Activated CD4-positive, alpha-beta T cell treated with anti-CD3 and anti-CD28 coated beads, Interleukin-2, amount 10 ng/mL, durations not matched to agents 24 days and 14 days (primary cell): ENCODE measurements at regions of chr4 and their contacts with region 1.

Region 1: GRCh38 chr4:39353478-39354253 is 12.5 kb downstream of the RFC1 start:
- DNase-seq: peak; percentile 82
- H3K4me3 Mint-ChIP-seq: peak overlapping the region; percentile 78
- H3K27ac Mint-ChIP-seq: peak overlapping the region; percentile 92
- H3K4me1 Mint-ChIP-seq: peaks cover 53% of the 10 kb centered on the region
- H3K27me3 Mint-ChIP-seq: no peaks in the 10 kb centered on the region

Region 2: GRCh38 chr4:38160487-38161207 is 1193.0 kb before region 1 on chr4:
- intact Hi-C with region 1: loop called (anchors 5 kb)
- DNase-seq: peak; percentile 88
- H3K4me3 Mint-ChIP-seq: peak overlapping the region; percentile 5
- H3K27ac Mint-ChIP-seq: peak overlapping the region; percentile 84
- H3K4me1 Mint-ChIP-seq: peaks cover 59% of the 10 kb centered on the region
- H3K27me3 Mint-ChIP-seq: peaks cover 7% of the 10 kb centered on the region

Region 3: DNA sequence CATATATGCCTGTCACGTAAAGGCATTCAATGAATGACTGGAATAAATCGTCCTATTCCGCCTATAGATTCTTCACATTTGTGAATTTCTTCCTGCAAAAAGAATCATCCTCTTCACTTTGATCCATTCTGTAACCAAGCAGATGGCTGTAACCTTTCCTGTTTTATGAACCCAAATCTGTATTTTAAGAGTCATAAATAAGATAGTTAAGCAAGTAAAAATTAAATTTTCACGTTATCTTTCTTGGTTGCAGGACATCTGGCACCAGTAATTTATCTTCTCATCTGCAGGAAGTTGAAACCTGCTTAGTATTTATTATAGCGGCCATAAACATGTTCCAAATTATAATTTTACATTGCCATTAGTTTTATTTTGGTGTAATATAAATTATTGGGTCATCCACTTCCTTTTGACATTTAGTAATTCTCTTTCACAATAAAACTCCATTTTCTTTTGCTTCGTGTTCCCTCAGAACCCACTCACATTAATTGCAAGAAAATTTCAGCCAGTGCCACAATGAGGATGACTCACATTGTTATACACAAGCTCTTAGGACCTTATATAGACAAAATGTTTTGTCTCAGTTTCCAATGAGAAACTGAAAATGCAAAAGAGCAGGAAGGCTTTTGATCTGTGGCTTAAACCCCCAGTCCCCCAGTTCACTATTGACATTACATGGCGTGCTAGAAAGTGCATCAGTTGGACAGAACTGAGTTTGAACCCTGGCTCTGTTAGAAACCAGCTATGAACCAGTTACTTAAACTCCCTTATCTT is 372.6 kb before region 1 on chr4:
- intact Hi-C with region 1: loop called (anchors 2 kb)
- DNase-seq: peak; percentile 73
- H3K4me3 Mint-ChIP-seq: peak overlapping the region; percentile 69
- H3K27ac Mint-ChIP-seq: peak overlapping the region; percentile 87
- H3K4me1 Mint-ChIP-seq: peaks cover 55% of the 10 kb centered on the region
- H3K27me3 Mint-ChIP-seq: no peaks in the 10 kb centered on the region

Region 4: DNA sequence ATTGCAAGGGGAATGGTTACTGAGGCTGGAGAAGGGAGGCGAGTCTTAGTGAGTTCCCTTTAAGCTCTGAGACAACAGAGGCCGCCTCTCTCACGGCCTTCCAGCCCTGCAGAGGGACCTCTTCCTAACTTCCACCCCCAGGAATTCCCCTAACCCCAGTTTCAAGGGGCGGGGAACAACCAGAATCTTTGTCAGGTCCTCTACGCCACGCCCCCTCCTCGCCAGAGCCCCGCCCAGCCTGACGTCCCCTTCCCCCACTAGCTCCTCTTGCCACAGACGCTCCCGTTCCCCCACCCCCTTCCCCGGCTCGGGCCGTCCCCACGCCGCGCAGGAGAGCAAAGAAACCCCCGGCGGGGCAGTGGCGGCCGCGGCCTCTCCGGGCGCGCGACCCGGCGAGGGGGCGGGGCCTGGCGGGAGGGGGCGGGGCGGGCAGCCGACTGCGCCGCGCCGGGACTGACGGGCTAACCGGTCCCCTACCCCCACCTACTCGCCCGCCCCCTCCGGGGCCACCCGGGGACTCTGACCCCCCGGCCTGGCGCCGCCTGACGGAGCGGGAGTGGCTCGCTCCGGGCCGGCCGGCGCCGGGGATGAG is 309.2 kb before region 1 on chr4:
- intact Hi-C with region 1: loop called (anchors 5 kb)
- DNase-seq: peak; percentile 99
- H3K4me3 Mint-ChIP-seq: peak overlapping the region; percentile 89
- H3K27ac Mint-ChIP-seq: peak overlapping the region; percentile 90
- H3K4me1 Mint-ChIP-seq: peaks cover 50% of the 10 kb centered on the region
- H3K27me3 Mint-ChIP-seq: no peaks in the 10 kb centered on the region

Region 5: GRCh38 chr4:39365830-39366771 is 12.4 kb after region 1 on chr4 and contains the start of gene RFC1:
- intact Hi-C with region 1: loop called (anchors 1 kb)
- DNase-seq: peak; percentile 98
- H3K4me3 Mint-ChIP-seq: peak within 1 kb of the TSS; percentile 96
- H3K27ac Mint-ChIP-seq: peak within 1 kb of the TSS; percentile 94
- H3K4me1 Mint-ChIP-seq: peaks cover 25% of the 10 kb centered on the region
- H3K27me3 Mint-ChIP-seq: no peaks in the 10 kb centered on the region
- total RNA-seq, gene RFC1: 81.6 and 83.0 TPM in 2 replicates

Region 6: GRCh38 chr4:39638354-39639240 is 284.9 kb after region 1 on chr4 and contains the start of gene SMIM14:
- intact Hi-C with region 1: loop called (anchors 10 kb)
- DNase-seq: peak; percentile 97
- H3K4me3 Mint-ChIP-seq: peak within 1 kb of the TSS; percentile 90
- H3K27ac Mint-ChIP-seq: peak within 1 kb of the TSS; percentile 69
- H3K4me1 Mint-ChIP-seq: peaks cover 31% of the 10 kb centered on the region
- H3K27me3 Mint-ChIP-seq: peaks cover 31% of the 10 kb centered on the region
- total RNA-seq, gene SMIM14: 1.0 and 2.0 TPM in 2 replicates